Activated CD4-positive, alpha-beta T cell treated with anti-CD3 and anti-CD28 coated beads, Interleukin-2, amount 10 ng/mL, durations not matched to agents 24 days and 14 days (primary cell): ENCODE measurements at regions of chr4 and their contacts with region 1.

Region 1: GRCh38 chr4:101347557-101348366 is 436 bp upstream of the PPP3CA start:
- DNase-seq: peak; percentile 99
- H3K4me3 Mint-ChIP-seq: peak overlapping the region; percentile 97
- H3K27ac Mint-ChIP-seq: peak overlapping the region; percentile 91
- H3K4me1 Mint-ChIP-seq: peaks cover 27% of the 10 kb centered on the region
- H3K27me3 Mint-ChIP-seq: peaks cover 62% of the 10 kb centered on the region

Region 2: GRCh38 chr4:99855678-99856077 is 1492.1 kb before region 1 on chr4:
- intact Hi-C with region 1: loop called (anchors 5 kb)
- DNase-seq: peak; percentile 82
- H3K4me3 Mint-ChIP-seq: peak overlapping the region; percentile 68
- H3K27ac Mint-ChIP-seq: peak overlapping the region; percentile 88
- H3K4me1 Mint-ChIP-seq: peaks cover 67% of the 10 kb centered on the region
- H3K27me3 Mint-ChIP-seq: no peaks in the 10 kb centered on the region

Region 3: GRCh38 chr4:101020956-101021355 is 326.8 kb before region 1 on chr4:
- intact Hi-C with region 1: loop called (anchors 5 kb)
- DNase-seq: peak; percentile 77
- H3K4me3 Mint-ChIP-seq: peak overlapping the region; percentile 66
- H3K27ac Mint-ChIP-seq: peak overlapping the region; percentile 82
- H3K4me1 Mint-ChIP-seq: peaks cover 42% of the 10 kb centered on the region
- H3K27me3 Mint-ChIP-seq: no peaks in the 10 kb centered on the region

Region 4: DNA sequence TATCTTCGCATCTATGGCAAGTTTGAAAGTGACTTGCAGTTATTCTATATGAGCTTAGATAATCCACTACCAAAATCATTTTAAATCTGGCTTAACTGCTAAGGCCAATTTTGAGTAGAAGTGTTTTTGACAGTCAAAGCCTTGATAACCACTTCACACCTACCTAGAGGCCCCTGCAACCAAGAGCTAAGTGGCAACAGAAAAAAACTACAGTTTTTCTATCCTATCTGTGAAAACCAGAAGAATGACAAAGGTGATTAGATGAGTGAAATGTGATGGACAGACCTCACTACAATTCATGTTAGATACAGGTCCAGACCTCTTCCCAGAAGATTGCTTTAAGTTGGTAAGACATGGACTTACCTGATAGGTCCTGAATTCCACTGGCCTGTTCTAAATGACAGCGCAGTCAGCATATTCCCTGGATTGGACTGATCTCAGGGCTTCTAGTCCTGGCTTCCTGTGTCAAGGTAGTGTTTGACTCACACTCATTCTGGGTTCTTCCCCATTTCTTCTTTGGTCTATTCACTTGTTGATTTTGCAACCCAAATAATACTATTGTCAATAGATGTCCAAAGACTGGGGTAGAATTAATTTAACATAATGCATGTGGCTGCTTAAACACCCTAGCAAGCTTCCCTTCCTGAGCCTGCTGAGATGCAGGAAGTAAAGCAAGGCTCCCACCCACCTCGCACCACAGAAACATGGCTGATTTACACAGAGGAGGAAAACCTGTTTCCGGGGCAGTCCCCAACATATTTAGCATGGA is 65.5 kb before region 1 on chr4:
- intact Hi-C with region 1: loop called (anchors 2 kb)
- DNase-seq: peak; percentile 75
- H3K4me3 Mint-ChIP-seq: no peak overlapping the region
- H3K27ac Mint-ChIP-seq: no peak overlapping the region
- H3K4me1 Mint-ChIP-seq: peaks cover 28% of the 10 kb centered on the region
- H3K27me3 Mint-ChIP-seq: no peaks in the 10 kb centered on the region

Region 5: DNA sequence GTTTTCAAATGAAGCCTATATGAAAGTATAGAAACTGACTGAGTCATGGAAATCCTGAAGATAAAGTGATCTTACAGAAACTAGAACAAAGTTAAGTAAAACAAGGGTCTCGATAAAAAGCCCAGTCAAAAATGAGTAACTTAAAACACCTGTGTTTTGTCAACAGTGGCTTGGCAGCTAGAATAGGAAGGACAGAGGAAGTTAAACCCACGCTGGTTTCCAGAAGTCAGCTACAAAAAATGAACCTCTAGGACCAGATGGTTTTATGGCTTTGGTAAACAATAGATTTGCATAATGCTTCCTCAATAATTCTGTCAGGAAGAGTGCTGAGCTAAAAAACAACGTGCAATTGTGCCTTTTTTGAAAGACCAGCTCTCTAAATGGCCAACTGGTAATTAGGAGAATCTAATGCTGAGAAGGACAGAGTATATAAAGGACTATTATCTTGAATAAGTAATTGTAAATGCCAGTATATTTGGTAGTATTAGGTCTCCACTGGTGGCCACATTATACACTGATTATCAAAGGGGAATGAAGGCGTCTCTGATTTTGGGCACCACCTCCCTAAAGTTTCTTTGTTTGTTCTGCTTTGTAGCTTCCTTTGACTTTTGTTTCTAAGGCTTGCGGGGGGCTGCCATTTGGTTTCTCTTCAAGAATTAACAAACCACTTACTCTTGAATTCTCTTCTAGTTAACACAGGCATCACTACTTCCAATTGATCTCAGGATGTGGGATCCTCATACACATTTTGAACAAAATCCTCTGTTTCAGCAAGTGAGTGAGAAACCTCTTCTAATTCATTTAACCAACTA is 71.8 kb after region 1 on chr4:
- intact Hi-C with region 1: loop called (anchors 1 kb)
- DNase-seq: peak; percentile 63
- H3K4me3 Mint-ChIP-seq: peak overlapping the region; percentile 71
- H3K27ac Mint-ChIP-seq: peak overlapping the region; percentile 55
- H3K4me1 Mint-ChIP-seq: peaks cover 44% of the 10 kb centered on the region
- H3K27me3 Mint-ChIP-seq: peaks cover 26% of the 10 kb centered on the region

Region 6: GRCh38 chr4:102500696-102501446 is 1153.1 kb after region 1 on chr4 and contains the start of gene NFKB1:
- intact Hi-C with region 1: loop called (anchors 2 kb)
- DNase-seq: peak; percentile 95
- H3K4me3 Mint-ChIP-seq: peak within 1 kb of the TSS; percentile 95
- H3K27ac Mint-ChIP-seq: peak within 1 kb of the TSS; percentile 95
- H3K4me1 Mint-ChIP-seq: peaks cover 22% of the 10 kb centered on the region
- H3K27me3 Mint-ChIP-seq: no peaks in the 10 kb centered on the region
- total RNA-seq, gene NFKB1: 146 and 148 TPM in 2 replicates